BJ (cell line): ENCODE measurements at regions of chr10 and their contacts with region 1.

Region 1: DNA sequence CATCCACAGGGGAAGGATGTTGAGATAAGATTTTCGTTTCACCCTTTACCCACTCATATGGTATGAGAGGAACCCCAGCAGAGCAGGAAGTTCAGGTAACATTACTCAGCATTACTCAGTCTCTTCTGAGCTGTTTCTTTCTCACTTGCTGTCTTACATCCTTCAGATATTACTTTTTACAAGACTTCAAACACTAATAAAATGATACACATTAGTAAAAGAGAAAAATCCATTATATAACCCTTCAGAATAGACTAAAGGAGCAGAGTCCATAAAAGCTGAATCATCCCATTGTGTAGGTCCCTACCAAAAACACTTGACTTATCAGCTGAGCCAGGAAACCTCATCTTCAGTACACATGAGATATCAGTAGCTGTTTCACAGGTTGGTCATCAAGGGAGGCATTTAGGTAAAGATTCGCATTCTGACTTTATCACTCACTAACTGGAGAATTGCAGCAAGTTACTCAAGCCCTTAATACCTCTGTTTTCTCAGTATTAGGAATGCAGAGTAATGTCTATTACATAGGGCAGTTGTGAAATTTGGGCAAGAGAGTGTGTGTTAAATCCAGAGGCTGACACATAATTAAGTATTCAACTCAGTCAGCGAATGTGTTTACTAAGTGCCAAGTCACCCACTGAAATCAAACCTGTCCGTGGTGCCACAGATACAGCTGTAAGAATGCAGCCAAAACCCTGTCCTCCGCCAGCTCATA is 44.7 kb downstream of the KLF6 start:
- DNase-seq: no peak
- H3K4me3 ChIP-seq: no peak overlapping the region
- H3K27me3 ChIP-seq: no peaks in the 10 kb centered on the region
- CTCF ChIP-seq: no peak

Region 2: DNA sequence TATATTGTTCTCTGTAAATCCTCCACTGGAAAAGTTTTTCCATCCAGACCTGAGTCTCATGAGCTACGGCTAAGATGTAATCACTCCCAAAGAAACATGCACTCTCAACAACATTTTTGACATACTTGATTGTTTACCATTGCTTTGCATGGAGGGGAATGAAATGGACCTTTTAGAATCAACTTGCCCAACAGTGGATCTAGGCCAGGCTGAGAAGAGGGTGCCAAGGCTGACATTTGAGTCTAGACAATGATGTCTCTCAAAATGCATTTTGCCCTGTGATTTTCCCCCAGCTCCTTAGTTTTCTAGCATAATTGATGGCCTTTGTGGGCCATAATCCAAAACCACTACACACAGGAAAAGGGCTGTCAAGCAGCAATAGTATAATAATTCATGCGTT is 342.5 kb after region 1 on chr10:
- CTCF ChIA-PET with region 1: no interaction called
- POLR2A ChIA-PET with region 1: interaction called, 14 read pairs
- DNase-seq: no peak
- H3K4me3 ChIP-seq: no peak overlapping the region
- H3K27me3 ChIP-seq: no peaks in the 10 kb centered on the region
- CTCF ChIP-seq: no peak